Dorsolateral prefrontal cortex (tissue), 120 donors: ENCODE measurements at regions of chr9 and their contacts with region 1.

Region 1: GRCh38 chr9:38068866-38069629 is at the start of gene SHB:
- DNase-seq: peak; percentile 53 to 86 (median 72)
- H3K4me3 ChIP-seq: peak within 1 kb of the TSS; percentile 67 to 98 (median 89)
- H3K27ac ChIP-seq: peak within 1 kb of the TSS in 58 of 59 donors; percentile 63 to 99 (median 95)
- H3K27me3 ChIP-seq: peaks cover 0 to 7% (median 0%) of the 10 kb centered on the region in 45 donors
- CTCF ChIP-seq: peak in 44 of 56 donors; percentile 6 to 72 (median 52)
- total RNA-seq, gene SHB: 6.0 to 49.5 (median 17.2) TPM

Region 2: GRCh38 chr9:37899041-37899440 is 170.0 kb before region 1 on chr9:
- intact Hi-C with region 1: no loop called
- DNase-seq: no peak
- H3K4me3 ChIP-seq: no peak overlapping the region
- H3K27ac ChIP-seq: no peak overlapping the region
- H3K27me3 ChIP-seq: no peaks in the 10 kb centered on the region
- CTCF ChIP-seq: no peak

Region 3: DNA sequence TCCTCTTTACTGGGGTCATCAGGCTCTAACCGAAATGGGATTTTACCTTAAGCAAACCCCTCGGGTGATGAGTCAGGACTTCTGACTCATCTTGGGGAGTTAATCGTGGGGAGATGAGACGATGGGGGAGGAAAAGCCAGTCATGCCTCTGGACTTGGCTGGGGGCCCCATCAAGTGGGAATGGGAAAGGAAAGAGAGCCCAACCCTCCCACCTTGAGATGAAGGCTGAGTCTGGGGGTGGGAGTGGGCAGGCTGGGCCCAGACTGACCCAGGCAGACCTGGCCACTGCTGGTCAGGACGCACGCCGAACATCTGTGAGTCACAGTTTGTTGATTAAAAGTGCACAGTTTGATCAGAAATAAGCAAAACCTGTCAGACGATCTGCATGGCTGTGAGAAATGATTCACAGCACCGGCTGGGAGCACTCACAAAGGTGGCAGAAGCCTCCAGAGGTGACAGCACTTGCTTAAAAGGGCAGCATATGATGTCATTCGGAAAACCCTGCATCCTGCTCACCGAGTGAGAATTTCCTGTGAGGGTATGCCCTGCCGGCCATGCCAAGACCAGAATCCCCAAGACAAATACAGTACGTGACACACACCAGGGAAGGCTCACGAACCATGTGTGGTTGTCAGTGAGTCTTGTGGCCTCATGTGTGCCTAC is 115.1 kb before region 1 on chr9:
- intact Hi-C with region 1: loop called in 1 of 2 experiments (anchors 5 kb)
- DNase-seq: no peak
- H3K4me3 ChIP-seq: no peak overlapping the region
- H3K27ac ChIP-seq: peak overlapping the region in 8 of 59 donors; percentile 3 to 46 (median 25)
- H3K27me3 ChIP-seq: no peaks in the 10 kb centered on the region
- CTCF ChIP-seq: no peak

Region 4: GRCh38 chr9:37994639-37995347 is 74.3 kb before region 1 on chr9:
- intact Hi-C with region 1: loop called in 1 of 2 experiments (anchors 2 kb)
- DNase-seq: peak; percentile 46 to 97 (median 94)
- H3K4me3 ChIP-seq: peak overlapping the region in 30 of 59 donors; percentile 2 to 46 (median 23)
- H3K27ac ChIP-seq: peak overlapping the region; percentile 82 to 99 (median 96)
- H3K27me3 ChIP-seq: no peaks in the 10 kb centered on the region
- CTCF ChIP-seq: peak in 15 of 56 donors; percentile 2 to 47 (median 26)

Region 5: GRCh38 chr9:38017149-38017884 is 51.7 kb before region 1 on chr9:
- intact Hi-C with region 1: loop called (anchors 2 kb)
- DNase-seq: peak; percentile 76 to 91 (median 88)
- H3K4me3 ChIP-seq: peak overlapping the region in 11 of 59 donors; percentile 2 to 36 (median 11)
- H3K27ac ChIP-seq: peak overlapping the region in 57 of 59 donors; percentile 7 to 93 (median 83)
- H3K27me3 ChIP-seq: no peaks in the 10 kb centered on the region
- CTCF ChIP-seq: peak in 54 of 56 donors; percentile 16 to 85 (median 64)

Region 6: DNA sequence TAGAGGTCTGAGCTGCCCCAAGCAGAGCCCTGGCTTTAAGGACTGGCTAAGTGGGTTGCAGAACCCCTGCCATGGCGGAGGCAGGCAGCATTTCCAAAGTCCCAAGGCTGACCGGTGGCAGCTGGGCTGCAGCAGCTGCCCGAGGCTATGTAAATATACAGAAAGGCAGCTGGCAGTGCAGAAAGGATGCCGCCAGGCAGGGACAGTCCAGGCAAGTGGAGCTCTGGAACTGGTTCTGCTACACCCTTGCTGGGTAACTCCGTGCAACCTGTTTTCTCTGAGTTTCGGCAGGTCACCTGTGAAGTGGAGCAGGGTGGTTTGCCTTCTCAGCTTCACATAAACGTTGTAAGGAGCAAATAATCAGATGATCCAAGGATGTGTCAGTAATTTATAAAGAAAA is 46.0 kb before region 1 on chr9:
- intact Hi-C with region 1: loop called in 1 of 2 experiments (anchors 2 kb)
- DNase-seq: peak in 9 of 10 donors; percentile 47 to 75 (median 66)
- H3K4me3 ChIP-seq: peak overlapping the region in 3 of 59 donors; percentile 24 to 40 (median 38)
- H3K27ac ChIP-seq: peak overlapping the region in 58 of 59 donors; percentile 37 to 94 (median 84)
- H3K27me3 ChIP-seq: no peaks in the 10 kb centered on the region
- CTCF ChIP-seq: peak in 1 of 56 donors; percentile 16